ENCODE measurements at regions of chr2 and their contacts with region 1.

Region 1: GRCh38 chr2:235595422-235596010 is 101.7 kb downstream of the AGAP1 start:
- DNase-seq: peak; percentile 73 to 77
- H3K4me3 ChIP-seq: no peak overlapping the region
- H3K27ac ChIP-seq: no peak overlapping the region
- H3K4me1 ChIP-seq: peaks cover 0 to 4% of the 10 kb centered on the region in 2 donors
- H3K27me3 ChIP-seq: no peaks in the 10 kb centered on the region
- CTCF ChIP-seq: peak; percentile 80 to 90 (median 88)
- POLR2A ChIP-seq: no peak

Region 2: GRCh38 chr2:235135990-235136561 is 459.4 kb before region 1 on chr2:
- intact Hi-C with region 1: loop called (anchors 10 kb)
- DNase-seq: peak; percentile 67 to 73
- H3K4me3 ChIP-seq: no peak overlapping the region
- H3K27ac ChIP-seq: no peak overlapping the region
- H3K4me1 ChIP-seq: no peaks in the 10 kb centered on the region
- H3K27me3 ChIP-seq: no peaks in the 10 kb centered on the region
- CTCF ChIP-seq: peak; percentile 50 to 78 (median 66)
- POLR2A ChIP-seq: no peak

Region 3: DNA sequence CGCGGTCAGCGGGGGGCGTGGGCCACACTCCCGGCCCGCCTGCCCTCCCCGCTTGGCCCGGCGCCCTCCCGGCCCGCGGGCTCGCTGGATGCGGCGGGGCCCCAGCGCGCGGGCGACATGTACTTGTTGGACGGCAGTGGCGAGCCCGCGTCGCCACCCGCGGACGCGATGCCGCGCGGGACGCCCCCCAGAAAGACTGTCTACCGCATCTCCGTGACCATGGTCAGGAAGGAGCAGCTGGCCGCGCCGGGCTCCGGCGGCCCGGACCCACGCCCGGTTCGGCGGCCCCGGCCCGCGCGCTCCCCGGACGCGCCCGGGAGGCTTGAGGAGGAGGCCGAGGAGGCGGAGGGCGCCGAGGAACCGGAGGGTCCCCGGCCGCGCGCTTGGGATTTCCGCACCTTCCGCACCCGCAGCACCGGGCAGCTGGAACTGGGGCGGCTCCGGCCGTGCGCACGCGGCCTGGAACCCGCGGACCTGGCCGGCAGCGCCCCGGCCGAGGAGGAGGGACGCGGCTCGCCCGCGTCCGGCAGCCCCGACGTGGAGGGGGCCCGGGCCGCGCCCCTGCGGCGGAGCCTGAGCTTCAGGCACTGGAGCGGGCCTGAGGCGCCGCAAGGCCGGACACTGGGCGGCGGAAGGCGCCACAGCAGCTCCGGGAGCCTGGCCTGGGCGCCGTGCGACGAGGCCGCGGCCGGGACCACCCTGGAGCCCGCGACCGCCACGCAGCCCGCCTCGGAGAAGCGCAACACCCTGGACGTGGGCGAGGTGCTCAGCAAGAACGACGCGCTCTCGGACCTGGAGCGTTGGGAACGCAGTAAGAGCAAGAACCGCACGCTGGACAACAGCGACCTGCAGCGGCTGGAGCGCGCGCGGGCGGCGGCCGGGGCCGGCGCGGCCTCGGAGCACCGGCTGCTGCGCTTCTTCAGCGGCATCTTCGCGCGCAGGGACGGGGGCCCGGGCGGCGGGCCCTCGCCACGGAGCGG is 74.8 kb after region 1 on chr2:
- intact Hi-C with region 1: loop called (anchors 2 kb)
- DNase-seq: peak; percentile 63 to 72
- H3K4me3 ChIP-seq: peak overlapping the region; percentile 41 to 51
- H3K27ac ChIP-seq: peak overlapping the region; percentile 38 to 56
- H3K4me1 ChIP-seq: peaks cover 0 to 14% of the 10 kb centered on the region in 2 donors
- H3K27me3 ChIP-seq: no peaks in the 10 kb centered on the region
- CTCF ChIP-seq: peak in 3 of 4 experiments; percentile 74 to 82 (median 78)
- POLR2A ChIP-seq: no peak

Region 4: DNA sequence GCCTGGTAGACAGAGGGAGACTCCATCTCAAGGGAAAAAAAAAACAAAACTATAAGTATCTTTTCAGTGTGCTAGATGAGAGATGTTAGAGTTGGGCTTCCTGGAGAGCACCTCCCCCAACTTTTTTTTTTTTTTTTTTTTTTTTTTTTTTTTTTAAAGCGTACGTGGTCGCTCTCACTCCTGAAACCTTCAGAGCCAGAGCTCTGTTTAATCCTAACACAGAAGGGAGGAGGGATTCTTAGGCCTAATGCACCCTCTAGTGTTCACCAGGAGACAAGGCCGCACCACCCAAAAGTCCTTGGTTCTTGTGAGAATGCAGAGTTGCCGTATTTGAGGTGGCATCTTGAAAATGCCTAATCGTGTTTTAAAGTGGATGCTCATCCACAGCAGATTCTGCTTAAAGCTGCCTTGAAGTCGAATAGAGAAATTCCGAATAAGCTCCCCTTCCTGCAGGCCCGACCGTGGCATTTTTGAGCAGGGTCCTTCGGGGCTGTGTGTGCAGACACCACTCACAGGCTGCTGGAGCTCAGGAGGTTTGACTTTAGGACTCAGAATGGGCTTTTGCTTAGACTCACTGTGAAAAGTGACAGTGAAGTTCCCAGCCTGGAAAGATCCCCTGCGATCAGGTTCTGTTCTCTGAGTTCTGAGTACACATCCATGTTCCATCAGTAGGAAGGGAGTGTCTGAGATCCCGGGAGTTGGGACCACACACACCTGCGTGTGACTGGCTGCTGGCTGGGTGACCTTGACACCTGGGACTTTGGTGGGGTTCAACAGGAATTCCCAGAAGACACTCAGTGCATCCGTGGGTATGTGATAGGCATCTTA is 151.0 kb after region 1 on chr2:
- intact Hi-C with region 1: loop called (anchors 5 kb)
- DNase-seq: peak; percentile 65 to 77
- H3K4me3 ChIP-seq: no peak overlapping the region
- H3K27ac ChIP-seq: no peak overlapping the region
- H3K4me1 ChIP-seq: no peaks in the 10 kb centered on the region
- H3K27me3 ChIP-seq: no peaks in the 10 kb centered on the region
- CTCF ChIP-seq: peak; percentile 75 to 85 (median 84)
- POLR2A ChIP-seq: no peak

Measured in uterus (tissue), 4 donors.